Heart right ventricle (tissue), 16 donors: ENCODE measurements at regions of chr5 and their contacts with region 1.

Region 1: GRCh38 chr5:71748369-71748780 is 29.3 kb downstream of the CARTPT start:
- DNase-seq: peak in 1 of 2 donors; percentile 45
- ATAC-seq: peak in 3 of 8 donors; percentile 74 to 94 (median 93)
- H3K4me3 ChIP-seq: no peak overlapping the region
- H3K27ac ChIP-seq: no peak overlapping the region
- H3K4me1 ChIP-seq: peaks cover 0 to 5% (median 0%) of the 10 kb centered on the region in 9 donors
- H3K27me3 ChIP-seq: no peaks in the 10 kb centered on the region
- CTCF ChIP-seq: no peak

Region 2: DNA sequence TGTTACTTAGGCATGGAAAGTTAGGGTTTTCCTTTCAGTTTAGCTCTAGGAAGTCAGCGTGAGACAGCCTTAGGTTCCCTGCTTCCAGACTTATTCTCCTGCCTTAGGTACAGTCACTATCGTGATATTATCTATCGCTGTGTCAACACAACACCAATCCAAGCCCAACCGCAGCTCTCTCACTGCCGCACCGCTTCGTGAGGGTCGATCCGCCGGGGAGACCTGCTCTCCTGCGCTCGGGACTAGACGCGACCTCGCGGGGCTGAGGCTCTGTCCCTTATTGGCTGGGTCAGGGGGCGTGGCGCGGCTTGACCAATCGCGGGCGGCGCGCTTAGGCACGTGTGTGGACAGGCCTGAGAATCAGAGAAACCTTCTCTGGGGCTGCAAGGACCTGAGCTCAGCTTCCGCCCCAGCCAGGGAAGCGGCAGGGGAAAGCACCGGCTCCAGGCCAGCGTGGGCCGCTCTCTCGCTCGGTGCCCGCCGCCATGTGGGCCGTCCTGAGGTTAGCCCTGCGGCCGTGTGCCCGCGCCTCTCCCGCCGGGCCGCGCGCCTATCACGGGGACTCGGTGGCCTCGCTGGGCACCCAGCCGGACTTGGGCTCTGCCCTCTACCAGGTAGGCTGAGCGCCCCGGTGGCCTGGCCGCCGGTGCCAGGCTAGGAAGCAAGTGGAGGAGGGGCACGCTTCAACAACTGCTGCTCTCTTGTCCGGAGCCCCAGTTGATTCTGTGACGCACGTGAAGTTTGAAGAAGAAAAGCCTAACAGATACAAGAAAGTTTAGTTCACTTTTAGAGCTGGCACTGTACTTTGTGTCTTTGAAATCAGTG is 161.2 kb before region 1 on chr5 and contains the start of gene MCCC2:
- intact Hi-C with region 1: loop called in 3 of 10 experiments (anchors 5 to 10 kb)
- DNase-seq: peak; percentile 97 to 98
- ATAC-seq: peak; percentile 100
- H3K4me3 ChIP-seq: peak within 1 kb of the TSS; percentile 35 to 98 (median 76)
- H3K27ac ChIP-seq: peak within 1 kb of the TSS; percentile 77 to 91 (median 82)
- H3K4me1 ChIP-seq: peaks cover 0 to 30% (median 18%) of the 10 kb centered on the region in 9 donors
- H3K27me3 ChIP-seq: no peaks in the 10 kb centered on the region
- CTCF ChIP-seq: peak in 1 of 9 donors; percentile 3
- total RNA-seq, gene MCCC2: 79.8 to 149 (median 127) TPM